CD14-positive monocyte (primary cell): ENCODE measurements at regions of chr19 and their contacts with region 1.

Region 1: DNA sequence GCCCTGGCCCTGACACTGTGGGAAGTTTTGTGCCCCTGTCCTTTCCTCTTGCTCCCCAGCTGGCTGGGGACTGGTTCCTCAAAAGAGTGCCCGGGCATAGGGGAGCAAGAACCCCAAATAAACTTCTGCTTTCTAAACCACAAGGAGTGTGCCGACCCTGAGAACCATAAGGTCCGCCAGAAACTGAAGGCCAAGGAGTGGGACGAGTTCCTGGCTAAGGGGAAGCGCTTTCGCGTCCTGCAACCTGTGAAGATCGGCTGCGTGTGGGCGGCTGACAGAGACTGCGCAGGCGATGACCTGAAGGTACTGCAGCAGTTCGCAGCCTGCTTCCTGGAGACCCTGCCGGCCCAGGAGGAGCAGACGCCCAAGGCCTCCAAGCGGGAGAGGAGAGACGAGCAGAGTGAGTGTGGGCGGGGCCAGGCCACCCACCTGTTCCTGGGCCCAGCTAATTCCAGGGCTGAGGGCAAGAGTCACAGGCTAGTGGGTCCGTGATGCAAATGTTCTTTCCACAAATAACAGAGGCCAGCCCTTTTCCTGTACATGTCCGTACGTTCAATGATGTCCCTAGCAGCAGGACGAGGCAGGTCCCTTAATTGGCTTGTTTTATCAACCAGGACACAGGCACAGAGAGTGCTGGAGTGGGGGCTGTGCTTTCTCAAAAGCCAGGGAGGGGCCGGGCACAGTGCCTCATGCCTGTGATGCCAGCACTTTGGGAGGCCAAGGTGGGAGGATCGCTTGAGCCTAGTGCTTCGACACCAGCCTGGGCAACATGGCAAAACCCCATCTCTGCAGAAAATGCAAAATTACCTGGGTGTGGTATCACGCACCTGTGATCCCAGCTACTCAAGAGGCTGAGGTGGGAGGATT is 25.6 kb downstream of the UBXN6 start:
- DNase-seq: peak; percentile 87 to 94 (median 91)
- H3K4me3 ChIP-seq: peak overlapping the region; percentile 13 to 70 (median 38)
- H3K4me3 Mint-ChIP-seq: peak overlapping the region; percentile 82 to 96
- H3K27ac ChIP-seq: peak overlapping the region; percentile 96 to 99
- H3K27ac Mint-ChIP-seq: peak overlapping the region; percentile 94 to 99 (median 98)
- H3K4me1 ChIP-seq: peaks cover 37 to 44% of the 10 kb centered on the region in 2 donors
- H3K4me1 Mint-ChIP-seq: peaks cover 38% of the 10 kb centered on the region
- H3K27me3 ChIP-seq: no peaks in the 10 kb centered on the region
- H3K27me3 Mint-ChIP-seq: peaks cover 0 to 6% (median 5%) of the 10 kb centered on the region in 3 donors
- CTCF ChIP-seq: no peak

Region 2: DNA sequence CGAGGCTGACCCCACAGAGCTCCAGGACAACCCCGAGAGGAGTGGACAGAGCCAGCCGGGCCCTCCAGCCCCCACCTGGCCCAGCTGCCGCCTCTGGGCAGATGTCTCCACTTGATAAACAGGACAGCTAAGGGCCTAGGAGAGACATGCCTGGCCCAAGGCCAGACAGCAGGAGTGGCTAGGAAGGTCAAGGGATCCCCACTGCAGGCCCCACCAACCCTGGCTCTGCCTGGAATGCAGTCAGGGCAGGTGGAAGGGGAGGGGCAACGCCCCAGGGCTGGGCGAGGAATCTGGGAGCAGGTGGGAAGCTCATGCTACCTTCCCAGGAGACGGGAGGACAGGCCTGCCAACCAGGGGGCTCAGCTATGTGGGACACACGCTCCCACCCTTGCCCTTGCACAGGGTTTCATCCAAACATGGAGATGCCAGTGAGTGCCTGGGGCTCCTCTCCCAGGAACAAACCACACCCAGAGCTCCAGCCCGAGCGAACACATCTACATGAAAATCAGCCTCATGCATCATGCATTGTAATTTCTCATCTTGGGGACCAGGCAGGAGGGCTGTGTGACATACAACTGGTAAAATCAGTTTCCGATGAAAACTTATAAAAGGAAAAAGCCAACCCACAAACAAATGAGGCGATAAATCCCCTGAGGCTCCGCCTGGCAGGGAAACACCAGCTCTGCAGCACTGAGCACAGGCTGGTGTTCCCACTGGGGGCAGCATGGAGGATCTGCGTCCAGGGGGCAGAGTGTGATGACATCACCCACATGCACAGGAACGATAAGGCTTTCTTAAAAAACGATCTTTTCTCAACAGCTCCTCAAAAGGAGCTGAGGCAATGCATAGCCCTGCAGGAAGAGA is 56.6 kb before region 1 on chr19:
- intact Hi-C with region 1: loop called in 1 of 2 experiments (anchors 2 kb)
- DNase-seq: peak in 2 of 3 donors; percentile 10 to 49
- H3K4me3 ChIP-seq: peak overlapping the region in 1 of 3 experiments; percentile 2
- H3K4me3 Mint-ChIP-seq: no peak overlapping the region
- H3K27ac ChIP-seq: peak overlapping the region; percentile 76 to 84
- H3K27ac Mint-ChIP-seq: peak overlapping the region; percentile 10 to 82 (median 51)
- H3K4me1 ChIP-seq: peaks cover 58 to 60% of the 10 kb centered on the region in 2 donors
- H3K4me1 Mint-ChIP-seq: peaks cover 64% of the 10 kb centered on the region
- H3K27me3 ChIP-seq: no peaks in the 10 kb centered on the region
- H3K27me3 Mint-ChIP-seq: no peaks in the 10 kb centered on the region
- CTCF ChIP-seq: no peak

Region 3: DNA sequence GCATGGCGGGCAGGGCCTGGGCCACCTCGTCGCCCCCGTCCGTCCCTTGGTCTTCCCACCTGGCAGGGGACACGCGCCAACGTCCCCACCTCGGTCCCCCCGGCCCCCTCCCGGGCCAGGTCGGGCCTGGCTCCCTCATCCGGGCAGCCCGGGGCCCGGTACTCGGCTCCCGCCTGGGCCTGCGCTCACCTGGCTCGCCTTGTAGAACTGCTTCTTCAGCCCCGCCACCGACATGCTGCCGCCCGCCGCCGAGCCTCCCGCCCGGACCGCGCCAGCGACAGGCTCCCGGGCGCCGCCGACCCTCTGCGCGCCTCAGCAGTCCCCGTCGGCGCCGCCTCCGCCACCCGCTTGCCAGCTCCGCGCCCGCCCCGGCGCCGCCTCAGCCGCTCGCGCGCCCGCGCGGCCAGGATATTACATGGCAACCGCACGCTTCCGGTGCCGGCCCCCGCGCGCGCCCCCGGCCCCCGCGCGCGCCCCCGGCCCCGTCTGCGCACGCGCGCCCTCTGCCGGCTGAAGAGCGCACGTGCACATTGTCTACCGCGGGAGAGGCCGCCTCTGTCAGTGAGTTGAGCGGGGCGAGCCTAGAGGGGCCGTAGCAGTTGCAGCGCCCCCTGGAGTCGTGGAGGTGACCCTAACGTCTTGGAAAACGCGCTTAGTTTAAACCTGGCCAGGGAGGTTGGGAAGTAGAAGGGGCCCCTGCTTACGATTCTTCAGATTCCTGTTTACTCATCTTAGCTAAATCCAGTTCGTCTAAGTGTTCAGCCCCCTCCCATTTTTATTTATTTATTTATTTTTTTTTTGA is 31.7 kb before region 1 on chr19 and contains the start of gene SH3GL1:
- intact Hi-C with region 1: loop called in 1 of 2 experiments (anchors 2 kb)
- DNase-seq: peak; percentile 94 to 97 (median 94)
- H3K4me3 ChIP-seq: peak within 1 kb of the TSS; percentile 85 to 98 (median 87)
- H3K4me3 Mint-ChIP-seq: peak within 1 kb of the TSS; percentile 87 to 93
- H3K27ac ChIP-seq: peak within 1 kb of the TSS; percentile 92 to 96
- H3K27ac Mint-ChIP-seq: peak within 1 kb of the TSS; percentile 95 to 98 (median 96)
- H3K4me1 ChIP-seq: peaks cover 37 to 50% of the 10 kb centered on the region in 2 donors
- H3K4me1 Mint-ChIP-seq: peaks cover 45% of the 10 kb centered on the region
- H3K27me3 ChIP-seq: no peaks in the 10 kb centered on the region
- H3K27me3 Mint-ChIP-seq: peaks cover 0 to 3% (median 0%) of the 10 kb centered on the region in 3 donors
- CTCF ChIP-seq: peak; percentile 96
- polyA plus RNA-seq, gene SH3GL1: 14.0 to 33.9 (median 15.0) TPM